Psoas muscle (tissue), 8 donors: ENCODE measurements at regions of chr21 and their contacts with region 1.

Region 1: GRCh38 chr21:35530766-35531165 is 481.7 kb upstream of the RUNX1 start:
- DNase-seq: no peak
- ATAC-seq: no peak
- H3K4me3 ChIP-seq: no peak overlapping the region
- H3K27ac ChIP-seq: no peak overlapping the region
- H3K4me1 ChIP-seq: no peaks in the 10 kb centered on the region
- H3K27me3 ChIP-seq: peaks cover 0 to 2% (median 0%) of the 10 kb centered on the region in 3 donors
- CTCF ChIP-seq: no peak

Region 2: GRCh38 chr21:35597750-35598339 is 67.1 kb after region 1 on chr21:
- intact Hi-C with region 1: loop called in 1 of 2 experiments (anchors 2 kb)
- DNase-seq: no peak
- ATAC-seq: no peak
- H3K4me3 ChIP-seq: no peak overlapping the region
- H3K27ac ChIP-seq: no peak overlapping the region
- H3K4me1 ChIP-seq: no peaks in the 10 kb centered on the region
- H3K27me3 ChIP-seq: no peaks in the 10 kb centered on the region
- CTCF ChIP-seq: no peak